CD8-positive, alpha-beta T cell (primary cell): ENCODE measurements at regions of chr22 and their contacts with region 1.

Region 1: DNA sequence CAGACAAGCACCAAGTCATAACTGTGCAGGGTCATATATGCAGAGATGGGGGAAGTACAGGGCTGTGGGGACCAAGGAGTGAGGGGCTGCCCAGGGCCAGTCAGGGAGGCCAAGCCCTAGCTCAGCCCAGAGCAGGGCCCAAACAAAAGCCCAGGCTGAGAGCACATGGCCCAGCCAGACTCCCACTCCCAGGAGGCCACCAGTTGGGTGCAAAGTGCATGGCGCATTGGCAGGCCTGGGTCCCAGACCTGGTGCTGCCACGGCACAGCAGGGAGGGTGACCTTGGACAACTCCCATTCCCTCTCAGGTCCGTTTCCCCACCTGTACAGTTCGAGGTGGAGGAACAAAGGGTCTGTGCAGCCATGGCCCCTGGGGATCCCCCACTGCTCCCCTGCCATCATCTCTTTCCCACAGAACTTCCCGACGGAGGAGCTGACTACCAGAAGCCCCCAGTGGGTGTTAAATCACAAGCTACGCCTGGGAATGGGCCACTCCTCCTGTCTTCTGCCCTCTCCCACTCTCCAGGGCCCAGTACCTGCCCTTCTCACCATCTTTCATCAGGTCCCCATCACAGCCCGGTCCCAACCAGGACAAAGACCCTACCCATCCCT is 608 bp downstream of the NIPSNAP1 start:
- DNase-seq: peak in 3 of 9 experiments; percentile 17 to 49 (median 36)
- ATAC-seq: peak; percentile 16
- H3K4me3 ChIP-seq: peak overlapping the region; percentile 69 to 80
- H3K4me3 Mint-ChIP-seq: peak overlapping the region; percentile 93
- H3K27ac ChIP-seq: peak overlapping the region; percentile 59 to 61
- H3K27ac Mint-ChIP-seq: peak overlapping the region; percentile 90
- H3K4me1 ChIP-seq: peaks cover 15% of the 10 kb centered on the region
- H3K4me1 Mint-ChIP-seq: peaks cover 21% of the 10 kb centered on the region
- H3K27me3 ChIP-seq: no peaks in the 10 kb centered on the region
- H3K27me3 Mint-ChIP-seq: no peaks in the 10 kb centered on the region
- CTCF ChIP-seq: no peak

Region 2: GRCh38 chr22:29359469-29359868 is 220.8 kb before region 1 on chr22:
- CTCF ChIA-PET with region 1: no interaction called
- POLR2A ChIA-PET with region 1: no interaction called
- intact Hi-C with region 1: no loop called
- DNase-seq: no peak
- ATAC-seq: no peak
- H3K4me3 ChIP-seq: no peak overlapping the region
- H3K4me3 Mint-ChIP-seq: no peak overlapping the region
- H3K27ac ChIP-seq: no peak overlapping the region
- H3K27ac Mint-ChIP-seq: peak overlapping the region; percentile 34
- H3K4me1 ChIP-seq: no peaks in the 10 kb centered on the region
- H3K4me1 Mint-ChIP-seq: no peaks in the 10 kb centered on the region
- H3K27me3 ChIP-seq: no peaks in the 10 kb centered on the region
- H3K27me3 Mint-ChIP-seq: no peaks in the 10 kb centered on the region
- CTCF ChIP-seq: no peak

Region 3: GRCh38 chr22:29553351-29554224 is 26.7 kb before region 1 on chr22 and contains the start of gene THOC5:
- CTCF ChIA-PET with region 1: no interaction called
- POLR2A ChIA-PET with region 1: interaction called, 9 read pairs
- intact Hi-C with region 1: loop called (anchors 1 to 2 kb)
- DNase-seq: peak; percentile 73 to 94 (median 91)
- ATAC-seq: peak; percentile 95
- H3K4me3 ChIP-seq: peak within 1 kb of the TSS; percentile 57 to 94
- H3K4me3 Mint-ChIP-seq: peak within 1 kb of the TSS; percentile 88
- H3K27ac ChIP-seq: peak within 1 kb of the TSS; percentile 61 to 66
- H3K27ac Mint-ChIP-seq: peak within 1 kb of the TSS; percentile 96
- H3K4me1 ChIP-seq: peaks cover 7% of the 10 kb centered on the region
- H3K4me1 Mint-ChIP-seq: peaks cover 27% of the 10 kb centered on the region
- H3K27me3 ChIP-seq: no peaks in the 10 kb centered on the region
- H3K27me3 Mint-ChIP-seq: no peaks in the 10 kb centered on the region
- CTCF ChIP-seq: no peak
- total RNA-seq, gene THOC5: 33.5 to 35.0 TPM

Region 4: GRCh38 chr22:30667494-30668385 is 1087.4 kb after region 1 on chr22 and contains the start of gene DUSP18:
- CTCF ChIA-PET with region 1: no interaction called
- POLR2A ChIA-PET with region 1: no interaction called
- intact Hi-C with region 1: loop called in 1 of 2 experiments (anchors 10 kb)
- DNase-seq: peak; percentile 88 to 98 (median 95)
- ATAC-seq: peak; percentile 90
- H3K4me3 ChIP-seq: peak within 1 kb of the TSS; percentile 73 to 87
- H3K4me3 Mint-ChIP-seq: peak within 1 kb of the TSS; percentile 96
- H3K27ac ChIP-seq: peak within 1 kb of the TSS; percentile 54 to 72
- H3K27ac Mint-ChIP-seq: peak within 1 kb of the TSS; percentile 94
- H3K4me1 ChIP-seq: peaks cover 11% of the 10 kb centered on the region
- H3K4me1 Mint-ChIP-seq: peaks cover 18% of the 10 kb centered on the region
- H3K27me3 ChIP-seq: no peaks in the 10 kb centered on the region
- H3K27me3 Mint-ChIP-seq: no peaks in the 10 kb centered on the region
- CTCF ChIP-seq: no peak
- total RNA-seq, gene DUSP18: 3.4 to 4.5 TPM